Activated T-helper 2 cell treated with anti-CD3 and anti-CD28 coated beads, Interferon-gamma antibody, Interleukin-2, Interleukin-4, amounts not matched to agents 10 μg/mL and 5 μg/mL and 100 μg/mL, durations not matched to agents 14 hours and 24 hours and 36 hours (primary cell): ENCODE measurements at regions of chr11 and their contacts with region 1.

Region 1: DNA sequence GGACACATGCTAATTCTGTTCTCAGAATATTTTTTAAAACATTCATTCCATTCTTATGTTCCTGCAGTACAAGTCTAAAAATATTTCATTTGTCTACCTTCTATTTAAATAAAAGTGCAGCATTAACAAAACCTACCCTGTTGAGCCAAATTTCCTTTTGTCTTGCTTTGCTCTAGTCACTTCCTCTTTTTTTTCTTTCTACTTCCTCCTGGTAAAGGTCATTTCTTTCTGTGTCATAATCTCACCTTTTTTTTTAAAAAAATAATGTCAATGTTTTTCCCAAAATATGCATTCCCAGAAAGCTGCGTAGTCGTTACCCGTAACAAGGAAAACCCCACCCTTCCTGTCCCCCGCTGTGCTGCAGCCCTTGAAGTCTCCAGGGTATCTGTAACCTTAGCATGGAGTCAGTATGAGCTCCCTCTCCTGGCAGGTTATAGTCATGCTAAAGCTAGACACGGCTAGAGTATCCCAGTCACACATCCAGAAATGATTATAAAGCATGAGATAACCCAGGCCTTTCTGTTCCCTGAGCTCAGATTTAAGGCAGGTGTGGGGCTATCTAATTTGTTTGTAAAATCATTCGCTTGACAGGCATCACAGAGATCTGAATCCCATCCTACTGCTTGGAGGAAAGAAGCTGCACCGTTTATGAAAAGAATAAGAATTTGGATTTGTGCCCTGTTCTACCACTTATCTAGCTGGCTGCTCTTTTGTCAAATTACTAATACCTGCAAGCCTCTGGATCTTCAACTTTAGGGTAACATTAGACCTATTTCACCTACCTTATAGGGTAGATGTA is 51.1 kb upstream of the EED start:
- DNase-seq: peak; percentile 53
- H3K4me3 Mint-ChIP-seq: peak overlapping the region; percentile 62
- H3K27ac Mint-ChIP-seq: peak overlapping the region; percentile 71
- H3K4me1 Mint-ChIP-seq: peaks cover 36% of the 10 kb centered on the region
- H3K27me3 Mint-ChIP-seq: no peaks in the 10 kb centered on the region

Region 2: DNA sequence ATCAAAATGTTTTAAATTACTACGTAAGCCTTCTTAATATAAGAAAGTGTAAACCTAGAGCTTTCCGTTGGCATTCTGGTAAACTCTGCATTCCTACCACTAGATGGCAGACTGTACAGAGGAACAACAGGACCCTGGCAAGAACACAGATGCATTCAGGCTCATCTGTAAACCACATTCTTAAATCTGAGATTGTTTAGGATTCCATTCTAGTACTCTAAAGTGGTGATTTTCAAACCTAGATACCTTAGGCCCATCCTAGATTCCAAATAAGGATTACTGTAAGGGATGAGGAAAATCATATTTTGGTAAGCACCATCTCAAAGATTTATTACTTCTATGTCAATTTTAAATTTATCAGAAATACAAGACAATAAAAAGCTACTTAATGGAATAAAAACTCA is 151.5 kb before region 1 on chr11:
- intact Hi-C with region 1: loop called (anchors 1 kb)
- DNase-seq: peak; percentile 27
- H3K4me3 Mint-ChIP-seq: peak overlapping the region; percentile 7
- H3K27ac Mint-ChIP-seq: peak overlapping the region; percentile 50
- H3K4me1 Mint-ChIP-seq: peaks cover 57% of the 10 kb centered on the region
- H3K27me3 Mint-ChIP-seq: no peaks in the 10 kb centered on the region

Region 3: DNA sequence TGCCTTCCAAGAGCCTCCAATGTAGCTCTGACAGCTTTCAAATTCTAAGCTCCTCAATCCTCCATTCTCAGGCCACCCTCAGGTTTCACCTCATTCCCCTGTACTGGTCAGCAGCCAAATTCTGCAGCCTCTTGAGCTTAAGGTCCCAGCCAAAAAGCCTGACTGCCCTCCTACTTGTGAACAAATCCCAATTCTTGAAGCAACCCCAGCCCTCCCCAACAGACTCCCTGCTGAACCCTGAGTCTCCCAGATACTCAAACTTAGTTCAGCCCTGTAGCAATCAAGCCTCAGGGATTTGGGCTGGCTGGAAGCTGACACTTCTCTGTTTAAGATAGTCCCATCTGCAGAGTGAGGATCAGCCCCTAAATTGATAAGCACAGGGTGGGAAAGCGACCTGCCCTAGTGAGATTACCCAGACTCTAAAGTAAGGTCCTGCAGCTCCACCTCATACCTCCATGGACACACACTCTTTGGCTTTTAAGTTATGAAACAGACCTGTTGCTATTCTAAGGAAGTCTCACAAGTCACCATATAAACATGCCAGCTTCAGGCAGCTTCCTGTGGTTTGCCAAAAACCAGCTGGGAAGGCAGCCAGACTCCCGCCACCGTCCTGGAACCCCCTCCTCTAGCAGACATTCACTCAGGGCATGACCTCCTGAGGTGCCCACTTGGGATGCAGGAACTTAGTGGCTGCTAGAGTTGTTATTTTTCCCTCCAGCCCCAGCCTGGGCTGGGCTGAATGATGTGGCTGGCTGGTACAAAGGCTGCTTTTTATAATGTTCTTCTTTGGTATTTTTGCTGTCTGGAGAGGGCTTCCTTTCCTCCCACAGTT is 42.1 kb before region 1 on chr11:
- intact Hi-C with region 1: no loop called
- DNase-seq: no peak
- H3K4me3 Mint-ChIP-seq: no peak overlapping the region
- H3K27ac Mint-ChIP-seq: peak overlapping the region; percentile 21
- H3K4me1 Mint-ChIP-seq: peaks cover 26% of the 10 kb centered on the region
- H3K27me3 Mint-ChIP-seq: no peaks in the 10 kb centered on the region

Region 4: DNA sequence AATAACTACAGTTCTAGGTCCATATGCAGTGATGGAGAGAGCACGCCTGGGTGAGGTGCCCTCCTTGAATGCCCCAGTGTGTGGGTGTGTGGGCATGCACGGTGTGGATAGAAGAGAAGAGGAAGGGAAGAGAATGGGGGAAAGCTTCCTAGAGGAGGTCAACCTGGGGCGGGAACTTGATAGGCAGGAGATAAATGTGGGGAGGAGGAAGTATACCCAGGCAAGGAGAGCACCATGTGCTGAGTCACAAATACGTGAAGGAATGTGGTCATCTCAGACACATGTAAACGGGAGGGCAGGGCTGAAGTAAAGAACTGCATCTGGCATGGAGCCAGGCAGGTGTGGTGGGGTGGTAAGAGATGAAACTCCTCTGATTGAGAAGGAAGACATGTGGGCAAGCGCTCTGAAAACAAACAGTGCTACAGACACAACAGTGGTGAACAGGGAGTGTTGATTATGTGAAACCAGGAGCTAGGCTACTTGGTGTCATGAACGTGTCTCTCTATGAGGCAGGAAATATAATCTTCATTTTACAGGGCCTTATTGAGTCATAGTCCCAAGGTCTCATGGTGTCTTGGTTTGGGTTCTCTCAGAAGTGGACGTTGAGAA is 10.4 kb before region 1 on chr11:
- intact Hi-C with region 1: loop called (anchors 1 kb)
- DNase-seq: peak; percentile 48
- H3K4me3 Mint-ChIP-seq: no peak overlapping the region
- H3K27ac Mint-ChIP-seq: no peak overlapping the region
- H3K4me1 Mint-ChIP-seq: peaks cover 26% of the 10 kb centered on the region
- H3K27me3 Mint-ChIP-seq: no peaks in the 10 kb centered on the region